CD4-positive, alpha-beta memory T cell (primary cell): ENCODE measurements at regions of chr16 and their contacts with region 1.

Region 1: GRCh38 chr16:2673066-2673999 is 9.0 kb upstream of the KCTD5 start:
- DNase-seq: peak; percentile 94 to 98 (median 97)
- H3K4me3 ChIP-seq: peak overlapping the region; percentile 70 to 81
- H3K4me3 Mint-ChIP-seq: peak overlapping the region; percentile 84 to 90 (median 88)
- H3K27ac ChIP-seq: peak overlapping the region; percentile 80
- H3K27ac Mint-ChIP-seq: peak overlapping the region; percentile 82 to 92 (median 87)
- H3K4me1 ChIP-seq: peaks cover 21% of the 10 kb centered on the region
- H3K4me1 Mint-ChIP-seq: peaks cover 14 to 49% (median 26%) of the 10 kb centered on the region in 4 donors
- H3K27me3 ChIP-seq: no peaks in the 10 kb centered on the region
- H3K27me3 Mint-ChIP-seq: no peaks in the 10 kb centered on the region

Region 2: GRCh38 chr16:2386990-2387389 is 286.3 kb before region 1 on chr16:
- CTCF ChIA-PET with region 1: no interaction called
- POLR2A ChIA-PET with region 1: no interaction called
- intact Hi-C with region 1: no loop called
- DNase-seq: no peak
- H3K4me3 ChIP-seq: no peak overlapping the region
- H3K4me3 Mint-ChIP-seq: no peak overlapping the region
- H3K27ac ChIP-seq: no peak overlapping the region
- H3K27ac Mint-ChIP-seq: no peak overlapping the region
- H3K4me1 ChIP-seq: no peaks in the 10 kb centered on the region
- H3K4me1 Mint-ChIP-seq: no peaks in the 10 kb centered on the region
- H3K27me3 ChIP-seq: no peaks in the 10 kb centered on the region
- H3K27me3 Mint-ChIP-seq: peaks cover 5 to 10% of the 10 kb centered on the region in 2 donors

Region 3: GRCh38 chr16:2513405-2514322 is 159.7 kb before region 1 on chr16 and contains the start of gene ATP6V0C:
- CTCF ChIA-PET with region 1: no interaction called
- POLR2A ChIA-PET with region 1: no interaction called
- intact Hi-C with region 1: loop called (anchors 5 kb)
- DNase-seq: peak; percentile 90 to 97 (median 94)
- H3K4me3 ChIP-seq: peak within 1 kb of the TSS; percentile 74 to 77
- H3K4me3 Mint-ChIP-seq: peak within 1 kb of the TSS; percentile 90 to 96 (median 92)
- H3K27ac ChIP-seq: peak within 1 kb of the TSS; percentile 94
- H3K27ac Mint-ChIP-seq: peak within 1 kb of the TSS; percentile 91 to 98 (median 97)
- H3K4me1 ChIP-seq: peaks cover 48% of the 10 kb centered on the region
- H3K4me1 Mint-ChIP-seq: peaks cover 32 to 64% (median 46%) of the 10 kb centered on the region in 4 donors
- H3K27me3 ChIP-seq: no peaks in the 10 kb centered on the region
- H3K27me3 Mint-ChIP-seq: no peaks in the 10 kb centered on the region
- total RNA-seq, gene ATP6V0C: 125 to 129 TPM